Activated CD4-positive, alpha-beta memory T cell treated with anti-CD3 and anti-CD28 coated beads for 36 hours (primary cell): ENCODE measurements at regions of chr7 and their contacts with region 1.

Region 1: GRCh38 chr7:134905375-134905774 is 80.9 kb upstream of the AGBL3 start:
- DNase-seq: no peak
- H3K4me3 Mint-ChIP-seq: no peak overlapping the region
- H3K27ac Mint-ChIP-seq: no peak overlapping the region
- H3K4me1 Mint-ChIP-seq: peaks cover 12% of the 10 kb centered on the region
- H3K27me3 Mint-ChIP-seq: no peaks in the 10 kb centered on the region

Region 2: DNA sequence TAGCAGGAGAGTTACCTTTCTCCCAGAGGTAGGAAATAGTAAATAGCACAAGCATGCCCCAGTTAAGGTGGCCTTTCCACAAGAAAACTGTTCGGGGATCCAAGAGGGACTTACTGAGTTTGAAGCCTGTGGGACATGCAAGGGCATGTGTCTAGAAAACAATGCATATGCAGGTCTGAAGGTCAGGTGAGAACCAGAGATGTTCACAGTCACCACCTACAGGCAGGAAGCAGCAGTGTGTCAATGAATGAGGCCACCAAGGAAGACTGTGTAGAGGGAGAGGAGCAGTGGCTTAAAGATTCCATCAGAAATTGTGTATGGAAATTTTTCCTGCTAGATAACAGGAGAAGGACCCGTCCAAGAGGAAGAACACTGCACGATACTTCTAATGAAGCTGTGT is 59.9 kb before region 1 on chr7:
- CTCF ChIA-PET with region 1: no interaction called
- POLR2A ChIA-PET with region 1: no interaction called
- intact Hi-C with region 1: loop called (anchors 5 kb)
- DNase-seq: no peak
- H3K4me3 Mint-ChIP-seq: no peak overlapping the region
- H3K27ac Mint-ChIP-seq: no peak overlapping the region
- H3K4me1 Mint-ChIP-seq: peaks cover 5% of the 10 kb centered on the region
- H3K27me3 Mint-ChIP-seq: no peaks in the 10 kb centered on the region

Region 3: DNA sequence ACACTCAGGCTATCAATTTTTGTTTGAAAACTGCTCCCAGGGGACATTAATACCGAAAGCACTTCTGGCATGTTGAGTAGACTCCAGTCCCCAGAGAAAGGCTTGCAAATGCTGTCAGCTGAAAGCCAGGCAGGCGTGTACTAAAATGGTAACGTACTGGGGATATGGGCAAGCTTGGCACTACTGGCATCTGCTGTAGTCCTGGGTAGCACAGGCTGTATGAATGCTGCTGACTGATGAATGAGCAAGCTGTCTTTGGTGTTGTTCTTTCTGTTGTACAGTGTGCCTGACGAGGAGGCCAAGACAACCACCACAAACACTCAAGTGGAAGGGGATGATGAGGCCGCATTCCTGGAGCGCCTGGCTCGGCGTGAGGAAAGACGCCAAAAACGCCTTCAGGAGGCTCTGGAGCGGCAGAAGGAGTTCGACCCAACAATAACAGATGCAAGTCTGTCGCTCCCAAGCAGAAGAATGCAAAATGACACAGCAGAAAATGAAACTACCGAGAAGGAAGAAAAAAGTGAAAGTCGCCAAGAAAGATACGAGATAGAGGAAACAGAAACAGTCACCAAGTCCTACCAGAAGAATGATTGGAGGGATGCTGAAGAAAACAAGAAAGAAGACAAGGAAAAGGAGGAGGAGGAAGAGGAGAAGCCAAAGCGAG is 27.5 kb after region 1 on chr7:
- CTCF ChIA-PET with region 1: no interaction called
- POLR2A ChIA-PET with region 1: no interaction called
- intact Hi-C with region 1: no loop called
- DNase-seq: no peak
- H3K4me3 Mint-ChIP-seq: no peak overlapping the region
- H3K27ac Mint-ChIP-seq: no peak overlapping the region
- H3K4me1 Mint-ChIP-seq: peaks cover 15% of the 10 kb centered on the region
- H3K27me3 Mint-ChIP-seq: no peaks in the 10 kb centered on the region

Region 4: GRCh38 chr7:135074085-135074484 is 168.7 kb after region 1 on chr7:
- CTCF ChIA-PET with region 1: no interaction called
- POLR2A ChIA-PET with region 1: no interaction called
- intact Hi-C with region 1: no loop called
- DNase-seq: no peak
- H3K4me3 Mint-ChIP-seq: no peak overlapping the region
- H3K27ac Mint-ChIP-seq: no peak overlapping the region
- H3K4me1 Mint-ChIP-seq: no peaks in the 10 kb centered on the region
- H3K27me3 Mint-ChIP-seq: no peaks in the 10 kb centered on the region